Transverse colon (tissue), 4 donors: ENCODE measurements at regions of chr4 and their contacts with region 1.

Region 1: DNA sequence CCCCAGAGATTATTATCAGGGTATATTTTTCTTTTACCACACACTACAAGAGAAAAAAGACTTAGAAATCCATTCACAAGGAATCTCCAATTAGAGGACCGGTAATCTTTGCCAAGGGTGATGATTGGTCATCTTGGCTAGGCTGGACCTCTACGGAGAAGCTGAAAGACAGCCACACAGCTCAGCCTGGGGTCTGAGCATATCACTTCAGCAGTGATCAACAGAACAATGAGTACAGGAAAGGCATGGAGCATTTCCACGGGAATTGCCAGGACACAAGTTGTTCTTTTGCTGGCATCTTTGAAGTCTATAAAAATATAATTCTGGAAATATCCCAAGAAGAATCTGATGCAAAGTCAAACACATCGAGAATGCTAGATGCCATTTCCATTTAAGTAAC is 191.5 kb downstream of the TENM3 start:
- DNase-seq: no peak
- H3K4me3 ChIP-seq: no peak overlapping the region
- H3K27ac ChIP-seq: peak overlapping the region in 1 of 4 donors; percentile 16
- H3K4me1 ChIP-seq: no peaks in the 10 kb centered on the region
- H3K27me3 ChIP-seq: no peaks in the 10 kb centered on the region
- CTCF ChIP-seq: no peak
- EP300 ChIP-seq: no peak
- POLR2A ChIP-seq: no peak

Region 2: DNA sequence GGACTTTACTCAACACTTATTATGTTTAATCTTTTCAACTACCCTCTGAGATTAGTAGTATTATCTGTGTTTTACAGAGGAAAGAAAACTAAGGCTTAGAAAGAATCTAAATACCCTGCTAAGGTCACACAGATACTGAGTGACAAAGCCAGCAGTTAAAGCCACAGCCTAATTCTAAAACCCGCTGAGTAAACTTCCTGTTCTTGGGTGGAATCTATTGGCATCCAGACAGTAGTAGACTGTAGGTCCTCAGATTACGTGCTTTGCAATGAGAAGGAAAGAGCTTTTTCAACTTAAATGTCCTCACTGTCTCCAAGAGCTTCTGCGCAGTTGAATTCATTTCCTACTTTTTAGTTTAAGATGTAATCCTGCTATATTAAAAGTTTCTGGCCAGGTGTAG is 65.5 kb before region 1 on chr4:
- in situ Hi-C with region 1: no loop called
- intact Hi-C with region 1: no loop called
- DNase-seq: no peak
- H3K4me3 ChIP-seq: no peak overlapping the region
- H3K27ac ChIP-seq: no peak overlapping the region
- H3K4me1 ChIP-seq: no peaks in the 10 kb centered on the region
- H3K27me3 ChIP-seq: no peaks in the 10 kb centered on the region
- CTCF ChIP-seq: no peak
- EP300 ChIP-seq: no peak
- POLR2A ChIP-seq: no peak

Region 3: GRCh38 chr4:182405087-182405486 is 29.6 kb before region 1 on chr4:
- in situ Hi-C with region 1: no loop called
- intact Hi-C with region 1: loop called (anchors 1 kb)
- DNase-seq: no peak
- H3K4me3 ChIP-seq: no peak overlapping the region
- H3K27ac ChIP-seq: no peak overlapping the region
- H3K4me1 ChIP-seq: no peaks in the 10 kb centered on the region
- H3K27me3 ChIP-seq: no peaks in the 10 kb centered on the region
- CTCF ChIP-seq: no peak
- EP300 ChIP-seq: no peak
- POLR2A ChIP-seq: no peak

Region 4: DNA sequence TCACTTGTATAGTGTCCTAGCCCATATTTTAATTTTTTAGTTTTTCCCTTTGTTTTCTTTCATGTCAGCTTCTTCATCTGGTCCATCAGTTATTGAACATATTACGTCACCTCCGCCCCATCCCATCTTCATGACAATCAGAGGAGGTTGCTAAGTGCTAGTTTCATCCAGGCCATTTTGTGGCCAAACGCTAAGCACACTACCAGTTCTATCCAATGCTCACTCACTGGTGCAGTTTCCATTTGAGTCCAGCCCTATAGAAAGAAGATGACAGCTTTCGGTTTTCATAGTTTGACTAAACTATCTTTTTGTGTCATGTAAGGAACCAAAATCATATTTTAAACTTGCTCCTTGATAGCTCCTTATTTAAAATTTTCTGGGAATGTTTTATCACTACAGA is 112.7 kb after region 1 on chr4:
- in situ Hi-C with region 1: no loop called
- intact Hi-C with region 1: no loop called
- DNase-seq: no peak
- H3K4me3 ChIP-seq: no peak overlapping the region
- H3K27ac ChIP-seq: no peak overlapping the region
- H3K4me1 ChIP-seq: no peaks in the 10 kb centered on the region
- H3K27me3 ChIP-seq: no peaks in the 10 kb centered on the region
- CTCF ChIP-seq: no peak
- EP300 ChIP-seq: no peak
- POLR2A ChIP-seq: no peak